H1 (cell line): ENCODE measurements at regions of chr13 and their contacts with region 1.

Region 1: GRCh38 chr13:100604918-100605710 is 16.5 kb upstream of the GGACT start:
- DNase-seq: no peak
- H3K4me3 ChIP-seq: no peak overlapping the region
- H3K27ac ChIP-seq: no peak overlapping the region
- H3K4me1 ChIP-seq: no peaks in the 10 kb centered on the region; a peak in 1 of 7 replicates
- H3K27me3 ChIP-seq: no peaks in the 10 kb centered on the region
- CTCF ChIP-seq: no peak
- EP300 ChIP-seq: no peak
- POLR2A ChIP-seq: no peak
- RAD21 ChIP-seq: no peak

Region 2: DNA sequence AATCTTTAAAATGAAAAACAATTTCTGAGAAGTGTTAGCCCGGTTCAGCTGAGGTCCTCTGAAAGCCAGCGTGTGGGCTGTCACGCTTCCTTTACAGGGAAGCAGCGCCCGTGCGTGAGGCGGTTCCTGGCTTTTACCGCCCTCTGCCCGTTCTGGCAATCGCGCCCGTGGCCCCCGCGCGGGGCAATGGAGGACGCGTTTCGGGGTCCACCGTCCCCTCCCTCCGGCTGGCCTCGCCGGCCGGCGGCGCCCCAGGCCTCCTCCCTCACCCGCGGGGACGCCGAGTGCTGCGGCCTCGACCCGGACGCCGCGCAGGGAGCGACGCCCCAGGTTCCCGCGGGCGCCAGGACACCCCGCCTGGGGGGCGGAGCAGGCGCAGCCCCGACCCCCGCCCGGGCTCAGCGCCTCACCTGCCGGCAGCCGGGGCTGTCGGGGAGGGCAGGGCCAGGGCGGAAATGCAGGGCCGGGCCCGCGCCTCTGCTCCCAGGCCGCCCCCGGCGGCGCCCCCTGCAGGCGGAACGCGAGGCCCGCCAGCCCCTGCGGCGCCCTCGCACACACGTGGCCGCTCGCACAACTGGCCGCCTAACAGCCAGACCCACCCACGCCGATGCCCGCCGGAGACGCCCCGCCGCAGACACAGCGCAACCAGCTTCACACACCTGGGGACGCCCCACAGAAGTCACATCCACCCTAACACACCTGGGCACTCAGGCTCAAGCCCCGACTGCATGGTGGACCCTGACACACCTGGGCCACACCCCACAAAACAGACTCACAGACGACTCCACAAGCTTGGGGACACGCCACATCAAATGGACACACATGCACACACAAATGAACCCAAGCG is 16.6 kb before region 1 on chr13 and contains the start of gene GGACT:
- CTCF ChIA-PET with region 1: interaction called, 15 read pairs
- POLR2A ChIA-PET with region 1: interaction called, 3 read pairs
- DNase-seq: peak; percentile 43 to 93
- H3K4me3 ChIP-seq: peak within 1 kb of the TSS; percentile 48 to 83 (median 62)
- H3K27ac ChIP-seq: no peak within 1 kb of the TSS
- H3K4me1 ChIP-seq: peaks cover 0 to 2% (median 0%) of the 10 kb centered on the region in 4 experiments; a peak in 1 of 7 replicates
- H3K27me3 ChIP-seq: peaks cover 0 to 6% (median 6%) of the 10 kb centered on the region in 4 experiments; a peak in 6 of 7 replicates
- CTCF ChIP-seq: peak; percentile 76 to 93 (median 87)
- EP300 ChIP-seq: peak in 1 of 2 experiments; percentile 12; a peak in 1 of 3 replicates
- POLR2A ChIP-seq: peak in 1 of 2 experiments; percentile 61; a peak in 1 of 3 replicates
- RAD21 ChIP-seq: peak; percentile 35 to 62; a peak in 3 of 4 replicates
- total RNA-seq, gene GGACT: 0.77 and 1.5 TPM in 2 replicates

Region 3: DNA sequence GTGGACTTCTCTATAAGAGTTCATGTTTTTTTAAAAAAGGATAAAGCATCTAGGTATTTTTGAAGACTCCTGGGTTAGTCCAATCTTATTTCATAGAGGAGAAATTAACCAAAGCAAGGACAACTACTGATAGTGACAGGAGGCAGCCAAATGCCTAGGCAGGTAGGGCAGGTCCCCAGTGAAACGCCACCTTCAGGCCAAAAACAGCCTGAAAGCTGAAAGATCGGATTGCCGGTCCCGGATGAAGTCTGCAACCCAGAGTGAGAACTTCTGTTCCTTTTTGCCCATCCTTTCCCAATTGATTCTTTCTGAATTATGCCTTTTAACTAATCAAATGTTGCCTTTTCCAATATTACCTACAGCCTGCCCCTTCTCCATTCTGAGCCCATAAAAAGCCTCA is 10.4 kb before region 1 on chr13:
- CTCF ChIA-PET with region 1: interaction called, 17 read pairs
- POLR2A ChIA-PET with region 1: interaction called, 3 read pairs
- DNase-seq: peak in 1 of 2 experiments; percentile 70
- H3K4me3 ChIP-seq: no peak overlapping the region
- H3K27ac ChIP-seq: no peak overlapping the region
- H3K4me1 ChIP-seq: 0 out of 7 replicates have a peak, but pooled peaks cover 0 to 2% (median 0%) of the 10 kb centered on the region in 4 experiments
- H3K27me3 ChIP-seq: no peaks in the 10 kb centered on the region
- CTCF ChIP-seq: peak; percentile 69 to 86 (median 83)
- EP300 ChIP-seq: no peak
- POLR2A ChIP-seq: no peak
- RAD21 ChIP-seq: peak; percentile 56 to 74; a peak in 3 of 4 replicates